ENCODE measurements at regions of chr4 and their contacts with region 1.

Region 1: DNA sequence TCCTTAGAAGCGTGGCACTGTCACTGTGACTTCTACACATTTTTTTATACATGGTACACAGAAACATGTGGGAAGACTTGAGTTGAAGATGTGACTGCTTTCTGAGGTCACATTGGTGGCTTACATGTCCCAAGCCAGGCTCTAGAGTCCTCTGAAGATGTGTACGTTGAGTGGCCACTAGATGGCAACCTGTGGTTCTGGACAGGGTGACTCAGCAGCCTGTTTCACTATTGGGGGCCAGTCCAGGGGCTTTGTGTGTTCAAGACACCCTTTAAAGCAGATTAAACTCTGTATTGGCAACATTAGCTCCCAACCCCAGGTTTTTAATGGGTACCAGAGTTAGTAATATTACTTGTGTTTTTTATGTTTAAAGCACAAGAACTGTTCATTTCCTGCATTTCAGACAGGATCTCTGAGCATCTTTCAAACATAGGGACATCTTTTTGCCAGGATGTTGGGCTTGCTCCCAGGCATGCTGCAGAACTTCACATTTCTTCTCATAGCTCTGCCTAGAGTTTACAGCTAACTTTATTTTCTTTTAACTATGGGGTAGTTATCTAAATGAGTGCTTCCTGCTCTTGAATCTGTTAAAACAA is 53.0 kb downstream of the DCUN1D4 start:
- DNase-seq: peak in 1 of 2 experiments; percentile 62
- H3K4me3 ChIP-seq: no peak overlapping the region
- H3K27ac ChIP-seq: 0 out of 2 replicates have a peak overlapping the region, but pooled peaks have one; percentile 8
- H3K4me1 ChIP-seq: no peaks in the 10 kb centered on the region
- H3K27me3 ChIP-seq: no peaks in the 10 kb centered on the region
- CTCF ChIP-seq: peak; percentile 66 to 82 (median 73)
- EP300 ChIP-seq: no peak
- POLR2A ChIP-seq: no peak
- RAD21 ChIP-seq: peak; percentile 56 to 67

Region 2: GRCh38 chr4:51885363-51885762 is 10.5 kb before region 1 on chr4:
- CTCF ChIA-PET with region 1: interaction called, 17 read pairs
- POLR2A ChIA-PET with region 1: interaction called, 4 read pairs
- DNase-seq: no peak
- H3K4me3 ChIP-seq: no peak overlapping the region
- H3K27ac ChIP-seq: no peak overlapping the region
- H3K4me1 ChIP-seq: peaks cover 5 to 10% (median 7%) of the 10 kb centered on the region in 4 experiments; a peak in 6 of 7 replicates
- H3K27me3 ChIP-seq: no peaks in the 10 kb centered on the region
- CTCF ChIP-seq: peak in 2 of 3 experiments; percentile 33 to 64; a peak in 2 of 4 replicates
- EP300 ChIP-seq: no peak
- POLR2A ChIP-seq: no peak
- RAD21 ChIP-seq: peak; percentile 43 to 47

Region 3: GRCh38 chr4:51906167-51906958 is 10.5 kb after region 1 on chr4:
- CTCF ChIA-PET with region 1: interaction called, 21 read pairs
- POLR2A ChIA-PET with region 1: interaction called, 4 read pairs
- DNase-seq: no peak
- H3K4me3 ChIP-seq: no peak overlapping the region
- H3K27ac ChIP-seq: no peak overlapping the region
- H3K4me1 ChIP-seq: no peaks in the 10 kb centered on the region
- H3K27me3 ChIP-seq: no peaks in the 10 kb centered on the region
- CTCF ChIP-seq: no peak
- EP300 ChIP-seq: no peak
- POLR2A ChIP-seq: no peak
- RAD21 ChIP-seq: no peak

Region 4: DNA sequence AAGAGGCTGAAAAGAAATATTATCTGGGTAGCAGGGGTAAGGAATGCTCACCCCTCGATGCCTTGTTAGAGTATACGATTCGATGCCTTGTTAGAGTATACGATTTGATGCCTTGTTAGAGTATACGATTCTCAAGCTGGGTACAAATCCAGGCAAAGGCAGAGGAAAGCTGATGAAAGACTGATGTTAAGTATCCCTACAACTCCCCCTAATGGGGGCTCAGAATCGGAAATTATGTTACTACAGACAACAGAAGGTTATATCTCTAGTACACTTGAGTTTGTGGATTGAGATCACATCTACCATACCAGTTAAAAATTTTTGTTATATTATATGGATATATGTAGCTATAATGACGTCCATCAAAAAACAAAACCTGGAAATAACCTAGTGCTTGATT is 119.5 kb after region 1 on chr4:
- CTCF ChIA-PET with region 1: interaction called, 13 read pairs
- POLR2A ChIA-PET with region 1: no interaction called
- DNase-seq: no peak
- H3K4me3 ChIP-seq: no peak overlapping the region
- H3K27ac ChIP-seq: no peak overlapping the region
- H3K4me1 ChIP-seq: no peaks in the 10 kb centered on the region
- H3K27me3 ChIP-seq: no peaks in the 10 kb centered on the region
- CTCF ChIP-seq: peak in 2 of 3 experiments; percentile 31 to 42; a peak in 2 of 4 replicates
- EP300 ChIP-seq: no peak
- POLR2A ChIP-seq: no peak
- RAD21 ChIP-seq: peak; percentile 69 to 70

Region 5: DNA sequence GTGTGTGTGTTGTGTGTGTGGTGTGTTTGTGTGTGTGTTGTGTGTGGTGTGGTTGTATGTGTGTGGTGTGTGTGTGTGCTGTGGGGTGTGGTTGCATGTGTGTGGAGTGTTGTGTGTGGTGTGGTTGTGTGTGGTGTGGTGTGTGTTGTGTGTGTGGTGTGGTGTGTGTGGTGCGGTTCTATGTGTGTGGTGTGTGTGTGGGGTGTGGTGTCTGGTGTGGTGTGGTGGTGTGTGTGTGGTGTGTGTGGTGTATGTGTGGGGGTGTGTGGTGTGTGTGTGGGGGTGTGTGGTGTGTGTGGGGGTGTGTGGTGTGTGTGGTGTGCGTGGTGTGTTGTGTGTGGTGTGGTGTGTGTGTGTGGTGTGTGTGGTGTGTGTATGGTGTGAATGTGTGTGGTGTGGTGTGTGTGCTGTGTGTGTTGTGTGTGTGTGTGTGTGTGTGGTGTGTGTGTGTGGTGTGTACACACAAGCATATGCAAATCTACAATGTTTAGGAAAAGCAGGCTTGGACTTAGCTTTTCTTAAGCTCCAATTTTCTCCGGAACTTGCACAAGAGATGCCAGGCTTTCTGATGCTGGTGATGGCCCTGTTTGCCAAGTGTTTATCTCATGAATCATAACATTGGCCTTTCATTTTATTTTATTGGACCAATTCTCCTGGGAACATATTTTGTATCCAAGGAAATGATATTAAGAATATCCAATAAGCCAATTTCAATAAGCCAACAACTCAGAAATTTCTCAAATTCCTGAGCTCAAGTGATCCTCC is 303.8 kb after region 1 on chr4:
- CTCF ChIA-PET with region 1: no interaction called
- POLR2A ChIA-PET with region 1: no interaction called
- DNase-seq: no peak
- H3K4me3 ChIP-seq: no peak overlapping the region
- H3K27ac ChIP-seq: no peak overlapping the region
- H3K4me1 ChIP-seq: peaks cover 0 to 10% (median 2%) of the 10 kb centered on the region in 4 experiments; a peak in 2 of 7 replicates
- H3K27me3 ChIP-seq: no peaks in the 10 kb centered on the region
- CTCF ChIP-seq: no peak
- EP300 ChIP-seq: no peak
- POLR2A ChIP-seq: no peak
- RAD21 ChIP-seq: no peak